ENCODE measurements at regions of chr11 and their contacts with region 1.

Region 1: GRCh38 chr11:115453693-115454490 is 50.3 kb downstream of the CADM1 start:
- DNase-seq: peak; percentile 54
- H3K4me3 ChIP-seq: peak overlapping the region; percentile 31
- H3K27ac ChIP-seq: no peak overlapping the region
- H3K4me1 ChIP-seq: peaks cover 26% of the 10 kb centered on the region
- CTCF ChIP-seq: no peak

Region 2: DNA sequence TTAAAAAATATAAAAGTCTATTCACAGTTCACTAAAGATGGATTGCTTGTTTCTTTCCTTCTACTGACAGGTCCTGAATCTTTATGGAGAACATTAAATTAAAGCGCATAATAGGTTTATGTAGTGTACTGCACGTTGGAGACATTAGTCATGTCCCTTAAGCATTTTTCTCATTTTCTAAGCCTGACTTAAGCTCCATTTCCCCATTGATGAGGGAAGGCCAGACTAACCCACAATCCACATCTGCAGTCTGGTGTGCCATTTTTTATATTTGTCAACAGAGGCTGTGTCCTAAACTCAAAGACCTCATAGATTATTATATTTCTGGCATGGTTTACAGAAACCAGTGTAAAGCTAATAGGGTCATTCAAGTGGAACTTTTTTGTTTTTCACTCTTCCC is 10.4 kb after region 1 on chr11:
- CTCF ChIA-PET with region 1: no interaction called
- POLR2A ChIA-PET with region 1: interaction called, 15 read pairs
- intact Hi-C with region 1: no loop called
- DNase-seq: no peak
- H3K4me3 ChIP-seq: no peak overlapping the region
- H3K27ac ChIP-seq: no peak overlapping the region
- H3K4me1 ChIP-seq: peaks cover 64% of the 10 kb centered on the region
- CTCF ChIP-seq: no peak

Measured in OCI-LY7 (cell line).